Activated CD4-positive, alpha-beta memory T cell treated with anti-CD3 and anti-CD28 coated beads for 36 hours (primary cell): ENCODE measurements at regions of chrX and their contacts with region 1.

Region 1: GRCh38 chrX:120629667-120630537 is at the start of gene C1GALT1C1:
- DNase-seq: peak; percentile 94
- H3K4me3 Mint-ChIP-seq: peak within 1 kb of the TSS; percentile 90
- H3K27ac Mint-ChIP-seq: peak within 1 kb of the TSS; percentile 95
- H3K4me1 Mint-ChIP-seq: peaks cover 23% of the 10 kb centered on the region
- H3K27me3 Mint-ChIP-seq: no peaks in the 10 kb centered on the region
- total RNA-seq, gene C1GALT1C1: 17.7 to 19.7 TPM

Region 2: GRCh38 chrX:120485638-120486520 is 144.0 kb before region 1 on chrX:
- CTCF ChIA-PET with region 1: no interaction called
- POLR2A ChIA-PET with region 1: no interaction called
- intact Hi-C with region 1: loop called (anchors 2 kb)
- DNase-seq: peak; percentile 69
- H3K4me3 Mint-ChIP-seq: peak overlapping the region; percentile 69
- H3K27ac Mint-ChIP-seq: peak overlapping the region; percentile 86
- H3K4me1 Mint-ChIP-seq: peaks cover 26% of the 10 kb centered on the region
- H3K27me3 Mint-ChIP-seq: no peaks in the 10 kb centered on the region

Region 3: GRCh38 chrX:120603707-120604360 is 26.1 kb before region 1 on chrX and contains the start of gene MCTS1:
- CTCF ChIA-PET with region 1: no interaction called
- POLR2A ChIA-PET with region 1: interaction called, 9 read pairs
- intact Hi-C with region 1: loop called (anchors 1 kb)
- DNase-seq: peak; percentile 87
- H3K4me3 Mint-ChIP-seq: peak within 1 kb of the TSS; percentile 95
- H3K27ac Mint-ChIP-seq: peak within 1 kb of the TSS; percentile 97
- H3K4me1 Mint-ChIP-seq: peaks cover 8% of the 10 kb centered on the region
- H3K27me3 Mint-ChIP-seq: no peaks in the 10 kb centered on the region
- total RNA-seq, gene MCTS1: 67.5 to 70.9 TPM